ENCODE measurements at regions of chr1 and their contacts with region 1.

Region 1: GRCh38 chr1:153946622-153947241 is at the start of gene DENND4B:
- DNase-seq: no peak
- ATAC-seq: peak; percentile 95
- H3K4me3 ChIP-seq: peak within 1 kb of the TSS; percentile 77 to 78
- H3K27ac ChIP-seq: peak within 1 kb of the TSS; percentile 78
- H3K4me1 ChIP-seq: peaks cover 14% of the 10 kb centered on the region
- H3K27me3 ChIP-seq: no peaks in the 10 kb centered on the region
- CTCF ChIP-seq: peak; percentile 99
- total RNA-seq, gene DENND4B: 56.2 TPM

Region 2: DNA sequence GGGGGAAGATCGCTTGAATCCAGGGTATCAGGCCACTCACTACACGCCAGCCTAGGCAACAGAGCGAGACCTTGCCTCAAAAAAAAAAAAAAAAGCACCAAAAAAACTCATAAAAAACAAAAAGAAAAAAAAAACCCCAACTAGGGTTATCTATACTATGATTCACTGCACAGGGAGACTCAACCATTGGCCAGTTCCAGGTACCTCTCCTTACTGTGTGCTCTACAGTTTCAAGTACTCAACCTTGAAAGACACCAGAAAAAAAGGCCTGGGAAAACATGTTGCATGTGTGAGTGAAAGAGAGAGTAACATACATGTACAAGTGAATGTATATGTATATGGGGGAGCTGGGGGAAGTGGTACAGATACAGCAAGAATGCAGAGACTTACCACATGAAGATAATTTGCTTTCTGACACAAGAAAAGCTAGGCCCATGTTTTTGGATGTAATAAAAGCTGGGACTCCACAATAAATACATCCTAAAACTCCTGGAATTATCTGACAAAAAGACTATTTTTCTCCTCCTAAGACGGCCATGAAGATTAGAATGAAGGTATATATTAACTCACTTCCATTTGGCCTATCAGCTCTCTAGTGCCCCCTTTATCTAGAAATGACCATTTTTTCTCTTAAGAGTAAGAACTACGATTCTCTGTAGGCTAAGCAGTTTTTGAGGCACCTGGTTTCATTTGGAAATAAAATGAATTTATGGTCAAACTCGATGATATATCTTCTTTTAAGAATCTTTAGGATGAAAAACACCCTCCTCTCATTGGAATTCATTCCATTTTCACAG is 119.4 kb before region 1 on chr1:
- CTCF ChIA-PET with region 1: interaction called, 12 read pairs
- POLR2A ChIA-PET with region 1: no interaction called
- in situ Hi-C with region 1: no loop called
- intact Hi-C with region 1: no loop called
- DNase-seq: no peak
- ATAC-seq: no peak; the same call in 1 of the 2 replicates
- H3K4me3 ChIP-seq: no peak overlapping the region
- H3K27ac ChIP-seq: no peak overlapping the region
- H3K4me1 ChIP-seq: no peaks in the 10 kb centered on the region
- H3K27me3 ChIP-seq: no peaks in the 10 kb centered on the region
- CTCF ChIP-seq: no peak

Region 3: DNA sequence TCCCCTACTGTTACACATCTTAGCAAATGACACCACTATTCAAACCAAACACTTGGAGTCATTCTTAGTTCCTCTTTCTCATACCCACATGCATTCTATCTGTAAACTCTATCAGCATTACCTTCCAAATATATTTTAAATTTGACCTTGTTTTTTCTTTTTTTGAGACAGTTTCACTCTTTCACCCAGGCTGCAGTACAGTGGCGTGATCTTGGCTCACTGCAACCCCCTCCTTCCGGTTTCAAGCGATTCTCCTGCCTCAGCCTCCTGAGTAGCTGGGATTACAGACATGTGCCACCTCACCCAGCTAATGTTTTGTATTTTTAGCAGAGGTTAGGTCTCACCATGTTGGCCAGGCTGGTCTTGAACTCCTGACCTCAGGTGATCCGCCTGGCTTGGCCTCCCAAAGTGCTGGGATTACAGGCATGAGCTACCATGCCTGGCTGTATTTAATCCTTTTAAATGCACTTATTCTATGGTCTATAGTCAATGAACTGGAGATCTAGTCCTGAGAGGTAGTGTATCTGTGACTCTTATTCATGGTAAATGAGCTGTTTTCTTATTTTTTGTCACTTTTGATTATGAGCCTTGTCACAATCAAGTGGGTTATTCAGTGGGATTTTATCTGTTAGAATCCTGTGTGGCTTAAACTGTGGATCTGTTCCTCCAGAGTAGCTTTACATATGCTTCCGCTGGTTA is 97.1 kb before region 1 on chr1:
- CTCF ChIA-PET with region 1: no interaction called
- POLR2A ChIA-PET with region 1: interaction called, 16 read pairs
- in situ Hi-C with region 1: no loop called
- intact Hi-C with region 1: no loop called
- DNase-seq: no peak
- ATAC-seq: no peak
- H3K4me3 ChIP-seq: no peak overlapping the region
- H3K27ac ChIP-seq: no peak overlapping the region
- H3K4me1 ChIP-seq: no peaks in the 10 kb centered on the region
- H3K27me3 ChIP-seq: no peaks in the 10 kb centered on the region
- CTCF ChIP-seq: no peak

Region 4: DNA sequence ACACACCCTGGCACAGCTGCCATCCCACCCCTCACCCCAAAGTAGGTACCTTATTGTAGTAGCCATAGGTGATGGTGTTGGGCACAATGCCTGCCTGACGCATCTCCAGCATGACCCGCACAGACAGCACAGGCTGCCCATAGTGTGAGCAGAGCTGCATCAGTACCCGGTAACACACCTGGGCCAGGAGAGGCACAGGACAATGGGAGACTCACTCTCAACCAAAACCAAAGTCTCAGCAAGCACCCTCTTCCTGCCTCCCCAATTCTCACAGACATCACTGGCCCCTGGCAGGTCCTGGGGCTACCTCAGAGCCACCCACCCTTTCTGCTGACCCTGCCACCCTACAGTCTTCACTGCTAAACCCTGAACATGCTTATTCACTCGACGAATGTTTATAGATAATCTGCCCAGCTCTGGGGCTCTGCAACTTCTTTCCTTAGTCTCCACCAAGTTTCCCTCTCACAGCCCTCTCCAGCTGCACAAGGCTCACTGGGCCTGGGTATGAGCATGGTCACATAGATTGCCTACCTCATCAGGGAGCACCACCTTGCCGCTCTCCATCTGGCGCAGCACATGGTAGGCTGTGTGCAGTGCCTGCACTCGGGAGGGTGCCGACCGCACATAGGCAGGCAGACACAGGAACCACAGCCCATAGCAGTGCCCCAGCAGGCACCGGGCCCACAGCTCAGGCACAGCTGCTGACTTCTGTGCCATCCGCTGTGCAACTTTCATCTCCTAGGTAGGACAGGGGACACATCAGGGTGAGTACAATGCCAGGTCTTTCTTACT is 10.5 kb before region 1 on chr1:
- CTCF ChIA-PET with region 1: no interaction called
- POLR2A ChIA-PET with region 1: no interaction called
- in situ Hi-C with region 1: no loop called
- intact Hi-C with region 1: no loop called
- DNase-seq: no peak
- ATAC-seq: no peak
- H3K4me3 ChIP-seq: no peak overlapping the region
- H3K27ac ChIP-seq: no peak overlapping the region
- H3K4me1 ChIP-seq: no peaks in the 10 kb centered on the region
- H3K27me3 ChIP-seq: no peaks in the 10 kb centered on the region
- CTCF ChIP-seq: no peak

Measured in Panc1 (cell line).